ENCODE measurements at regions of chr2 and their contacts with region 1.

Region 1: DNA sequence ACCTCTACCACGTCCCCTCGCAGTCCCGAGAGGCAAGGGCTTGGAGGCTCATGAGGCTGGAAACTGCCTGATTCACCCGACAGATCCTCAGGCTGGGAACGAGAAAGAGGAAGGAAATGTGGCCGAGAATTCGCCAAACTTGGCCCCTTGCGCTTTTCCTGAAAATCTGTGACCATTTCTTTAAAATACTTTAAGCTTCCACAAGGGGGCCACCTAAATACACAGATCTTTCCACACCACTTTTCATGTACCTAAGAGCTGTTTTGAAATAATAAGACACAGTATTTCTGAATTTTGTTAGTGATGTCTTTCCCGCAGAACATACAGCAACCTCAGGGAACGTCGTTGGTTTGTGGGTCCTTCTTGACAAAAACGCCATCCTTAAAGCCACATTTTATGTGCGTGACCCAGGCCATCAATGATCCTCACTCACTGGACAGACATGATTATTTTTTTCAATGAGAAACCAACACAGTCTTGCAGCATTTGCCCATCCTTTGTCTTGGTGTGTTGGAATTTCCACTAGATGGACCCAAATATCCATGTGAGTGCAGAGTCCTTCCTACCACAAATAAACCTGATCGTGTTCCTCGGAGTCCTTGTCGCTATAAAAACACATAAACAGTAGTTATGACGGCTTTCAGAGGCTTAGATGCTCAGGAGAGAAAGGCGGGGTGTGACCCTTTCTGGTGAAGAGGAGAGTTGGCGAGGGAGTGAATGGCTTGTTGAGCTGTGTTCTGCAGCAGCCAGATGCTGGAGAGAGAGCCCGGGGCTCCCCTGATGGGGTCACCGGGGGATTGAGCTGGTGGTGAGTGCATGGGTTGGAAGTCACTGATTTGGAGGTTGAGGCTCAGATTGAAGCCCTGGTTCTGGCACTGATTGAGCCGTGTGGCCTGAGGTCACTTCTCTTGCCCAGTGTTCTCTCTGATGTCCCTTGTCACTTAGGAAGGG is 25.0 kb downstream of the DCDC2C start:
- DNase-seq: peak; percentile 56 to 65
- ATAC-seq: peak in 1 of 2 experiments; percentile 67; a peak in 3 of 6 replicates
- H3K4me3 ChIP-seq: no peak overlapping the region
- H3K27ac ChIP-seq: no peak overlapping the region
- H3K4me1 ChIP-seq: peaks cover 8% of the 10 kb centered on the region; the same call in 2 of the 3 replicates
- CTCF ChIP-seq: peak; percentile 85
- EP300 ChIP-seq: no peak
- POLR2A ChIP-seq: no peak
- RAD21 ChIP-seq: peak; percentile 79 to 80

Region 2: GRCh38 chr2:3692381-3692780 is 36.0 kb before region 1 on chr2:
- CTCF ChIA-PET with region 1: interaction called, 18 read pairs
- POLR2A ChIA-PET with region 1: no interaction called
- DNase-seq: peak; percentile 40 to 49
- ATAC-seq: peak; percentile 78 to 86; a peak in 5 of 6 replicates
- H3K4me3 ChIP-seq: no peak overlapping the region
- H3K27ac ChIP-seq: no peak overlapping the region
- H3K4me1 ChIP-seq: no peaks in the 10 kb centered on the region
- CTCF ChIP-seq: peak; percentile 61
- EP300 ChIP-seq: no peak
- POLR2A ChIP-seq: no peak
- RAD21 ChIP-seq: peak; percentile 66 to 84

Region 3: GRCh38 chr2:3712831-3713503 is 15.4 kb before region 1 on chr2:
- CTCF ChIA-PET with region 1: interaction called, 14 read pairs
- POLR2A ChIA-PET with region 1: no interaction called
- DNase-seq: no peak
- ATAC-seq: no peak
- H3K4me3 ChIP-seq: no peak overlapping the region
- H3K27ac ChIP-seq: no peak overlapping the region
- H3K4me1 ChIP-seq: no peaks in the 10 kb centered on the region
- CTCF ChIP-seq: no peak
- EP300 ChIP-seq: no peak
- POLR2A ChIP-seq: no peak
- RAD21 ChIP-seq: no peak

Region 4: DNA sequence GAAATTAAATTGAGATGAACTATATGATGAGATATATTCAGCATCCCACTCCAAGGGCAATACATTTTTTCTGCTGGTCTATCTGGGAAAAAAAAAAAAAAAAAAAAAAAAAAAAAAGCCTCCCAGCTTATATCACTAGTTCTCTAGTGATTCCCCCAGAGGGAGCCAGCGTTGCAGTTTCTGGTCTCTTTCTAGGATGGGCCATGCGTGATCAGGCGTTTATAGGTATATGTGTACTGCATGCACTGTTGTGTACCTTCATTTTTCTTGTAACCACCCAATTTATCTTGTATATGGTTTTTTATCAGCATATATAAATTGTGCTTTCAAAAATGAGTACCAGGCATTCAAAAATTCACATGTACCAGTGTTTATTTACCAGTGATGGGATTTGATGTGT is 10.1 kb after region 1 on chr2:
- CTCF ChIA-PET with region 1: interaction called, 24 read pairs
- POLR2A ChIA-PET with region 1: no interaction called
- DNase-seq: peak; percentile 63 to 75
- ATAC-seq: peak; percentile 93 to 94
- H3K4me3 ChIP-seq: no peak overlapping the region
- H3K27ac ChIP-seq: no peak overlapping the region
- H3K4me1 ChIP-seq: no peaks in the 10 kb centered on the region
- CTCF ChIP-seq: peak; percentile 54
- EP300 ChIP-seq: no peak
- POLR2A ChIP-seq: no peak
- RAD21 ChIP-seq: peak; percentile 49 to 76; a peak in 3 of 5 replicates

Region 5: DNA sequence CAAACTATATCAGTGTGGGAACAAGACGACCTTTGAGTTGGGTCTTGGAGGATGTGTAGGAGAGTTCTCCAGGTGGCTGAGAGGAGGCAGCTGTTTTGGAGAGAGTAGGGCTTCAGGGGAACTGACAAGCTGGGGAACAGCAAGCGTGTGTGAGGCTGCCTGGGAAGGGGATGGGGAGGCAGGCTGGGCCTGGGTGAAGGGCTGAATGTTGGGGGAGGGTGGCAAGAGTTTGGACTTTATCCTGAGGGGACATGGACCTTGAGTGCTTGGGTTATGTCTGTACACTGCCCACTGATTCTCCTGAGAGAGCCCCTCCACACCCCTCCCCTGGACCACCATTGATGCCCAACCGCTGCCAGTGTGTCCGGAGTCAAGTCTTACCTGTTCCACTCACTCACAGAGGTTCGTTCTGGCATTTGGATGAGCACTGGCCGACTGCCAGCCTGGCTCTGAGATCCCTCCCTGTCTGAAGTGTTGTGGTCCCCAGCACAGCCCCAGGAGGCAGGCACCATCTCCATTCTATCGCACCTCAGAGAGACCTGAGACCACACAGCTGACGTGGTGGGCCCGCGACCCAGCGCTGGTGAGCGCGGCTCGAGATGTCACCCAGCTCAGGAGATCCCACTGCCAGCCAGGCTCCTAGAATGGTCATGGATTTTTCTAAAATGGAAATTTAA is 34.5 kb after region 1 on chr2:
- CTCF ChIA-PET with region 1: no interaction called
- POLR2A ChIA-PET with region 1: no interaction called
- DNase-seq: no peak
- ATAC-seq: no peak; a peak in 1 of 6 replicates
- H3K4me3 ChIP-seq: no peak overlapping the region
- H3K27ac ChIP-seq: no peak overlapping the region
- H3K4me1 ChIP-seq: no peaks in the 10 kb centered on the region
- CTCF ChIP-seq: no peak
- EP300 ChIP-seq: no peak
- POLR2A ChIP-seq: no peak
- RAD21 ChIP-seq: no peak

Region 6: GRCh38 chr2:3780477-3781402 is 52.4 kb after region 1 on chr2:
- CTCF ChIA-PET with region 1: interaction called, 31 read pairs
- POLR2A ChIA-PET with region 1: no interaction called
- DNase-seq: peak; percentile 71 to 76
- ATAC-seq: peak; percentile 79 to 96
- H3K4me3 ChIP-seq: no peak overlapping the region
- H3K27ac ChIP-seq: no peak overlapping the region
- H3K4me1 ChIP-seq: 0 out of 3 replicates have a peak, but pooled peaks cover 4% of the 10 kb centered on the region
- CTCF ChIP-seq: peak; percentile 63
- EP300 ChIP-seq: no peak
- POLR2A ChIP-seq: no peak
- RAD21 ChIP-seq: peak; percentile 36 to 66; a peak in 2 of 5 replicates

Region 7: DNA sequence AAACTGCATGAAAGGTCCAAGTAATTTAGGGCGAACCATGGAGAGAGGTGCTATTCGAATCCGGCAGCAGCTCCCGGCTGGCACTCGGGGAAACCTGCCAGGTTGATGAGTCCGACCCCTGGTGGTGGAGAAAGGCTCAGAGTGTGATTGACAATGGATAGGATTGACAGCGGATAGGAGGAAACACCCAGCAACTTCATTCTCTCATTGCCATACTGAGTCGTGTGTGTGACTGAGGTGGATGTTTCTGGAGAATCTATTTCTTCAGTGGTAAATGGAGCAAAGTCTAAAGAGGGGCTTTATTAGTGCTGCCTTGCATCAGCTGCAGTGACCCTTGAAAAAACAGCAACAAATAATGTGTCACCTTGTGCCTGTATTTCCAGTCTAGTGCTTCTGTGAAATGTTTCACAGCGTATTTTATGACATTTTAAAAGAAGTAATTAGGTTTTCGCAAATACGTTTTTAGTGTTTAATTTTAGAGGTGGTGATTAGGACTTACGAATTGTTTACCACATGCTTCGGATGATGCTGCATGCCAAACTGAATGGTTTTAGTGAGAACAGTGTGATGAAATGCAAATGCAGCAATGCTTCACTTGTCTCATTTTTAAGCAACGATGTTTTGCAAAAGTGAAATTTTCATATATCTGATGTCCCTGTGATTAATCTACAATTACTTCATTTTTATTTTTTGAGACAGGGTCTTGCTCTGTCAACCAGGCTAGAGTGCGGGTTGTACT is 77.0 kb after region 1 on chr2:
- CTCF ChIA-PET with region 1: interaction called, 66 read pairs
- POLR2A ChIA-PET with region 1: no interaction called
- DNase-seq: peak; percentile 54 to 64
- ATAC-seq: peak; percentile 80 to 93
- H3K4me3 ChIP-seq: no peak overlapping the region
- H3K27ac ChIP-seq: no peak overlapping the region
- H3K4me1 ChIP-seq: no peaks in the 10 kb centered on the region; the same call in 2 of the 3 replicates
- CTCF ChIP-seq: peak; percentile 55
- EP300 ChIP-seq: no peak
- POLR2A ChIP-seq: no peak
- RAD21 ChIP-seq: peak; percentile 41 to 48; a peak in 4 of 5 replicates

Region 8: GRCh38 chr2:3827673-3828575 is 99.5 kb after region 1 on chr2:
- CTCF ChIA-PET with region 1: interaction called, 40 read pairs
- POLR2A ChIA-PET with region 1: no interaction called
- DNase-seq: peak; percentile 35 to 60
- ATAC-seq: peak; percentile 61 to 91; a peak in 4 of 6 replicates
- H3K4me3 ChIP-seq: no peak overlapping the region
- H3K27ac ChIP-seq: no peak overlapping the region
- H3K4me1 ChIP-seq: no peaks in the 10 kb centered on the region
- CTCF ChIP-seq: peak; percentile 73
- EP300 ChIP-seq: no peak
- POLR2A ChIP-seq: no peak
- RAD21 ChIP-seq: peak; percentile 52 to 58